ENCODE measurements at regions of chr1 and their contacts with region 1.

Region 1: GRCh38 chr1:8848663-8849386 is 29.7 kb downstream of the ENO1 start:
- DNase-seq: peak; percentile 66 to 80
- ATAC-seq: peak; percentile 83 to 92
- H3K4me3 ChIP-seq: no peak overlapping the region
- H3K27ac ChIP-seq: peak overlapping the region in 1 of 2 experiments; percentile 52; a peak in 2 of 6 replicates
- H3K4me1 ChIP-seq: peaks cover 4% of the 10 kb centered on the region; the same call in 1 of the 3 replicates
- CTCF ChIP-seq: peak; percentile 83
- EP300 ChIP-seq: no peak
- POLR2A ChIP-seq: no peak
- RAD21 ChIP-seq: peak; percentile 75 to 84

Region 2: GRCh38 chr1:8384577-8384976 is 464.2 kb before region 1 on chr1:
- CTCF ChIA-PET with region 1: no interaction called
- POLR2A ChIA-PET with region 1: no interaction called
- DNase-seq: no peak
- ATAC-seq: no peak
- H3K4me3 ChIP-seq: no peak overlapping the region
- H3K27ac ChIP-seq: no peak overlapping the region
- H3K4me1 ChIP-seq: no peaks in the 10 kb centered on the region
- CTCF ChIP-seq: no peak
- EP300 ChIP-seq: no peak
- POLR2A ChIP-seq: no peak
- RAD21 ChIP-seq: no peak

Region 3: GRCh38 chr1:8560611-8561544 is 287.9 kb before region 1 on chr1:
- CTCF ChIA-PET with region 1: interaction called, 16 read pairs
- POLR2A ChIA-PET with region 1: no interaction called
- DNase-seq: peak; percentile 15 to 55
- ATAC-seq: peak; percentile 73 to 76; a peak in 5 of 6 replicates
- H3K4me3 ChIP-seq: no peak overlapping the region
- H3K27ac ChIP-seq: peak overlapping the region in 1 of 2 experiments; percentile 29; a peak in 1 of 6 replicates
- H3K4me1 ChIP-seq: peaks cover 39% of the 10 kb centered on the region
- CTCF ChIP-seq: peak; percentile 79
- EP300 ChIP-seq: no peak
- POLR2A ChIP-seq: no peak
- RAD21 ChIP-seq: peak; percentile 82 to 86

Region 4: DNA sequence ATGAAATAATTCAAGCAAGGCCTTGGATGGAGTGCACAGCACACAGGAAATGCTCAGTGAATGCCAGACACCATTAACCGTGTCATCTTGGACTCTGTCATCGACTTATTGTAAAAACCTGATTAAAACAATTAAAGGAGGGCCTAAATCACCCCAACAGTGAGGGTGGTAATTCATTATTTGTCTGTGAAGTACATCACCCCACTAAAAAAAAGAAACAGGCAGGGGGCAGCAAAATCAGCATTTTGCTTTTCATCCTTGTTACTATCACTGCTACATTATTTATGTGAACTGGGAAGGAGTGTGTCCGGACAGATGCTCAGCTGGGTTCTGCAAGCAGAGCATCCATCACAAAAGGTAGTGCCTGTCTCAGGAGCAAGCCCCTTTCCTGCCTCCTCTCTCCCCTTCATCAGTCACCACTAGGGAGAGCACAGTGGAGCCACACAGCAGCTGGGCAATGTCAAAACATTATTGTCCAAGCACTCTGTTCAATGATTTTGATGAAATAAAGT is 129.9 kb before region 1 on chr1:
- CTCF ChIA-PET with region 1: interaction called, 11 read pairs
- POLR2A ChIA-PET with region 1: no interaction called
- DNase-seq: no peak
- ATAC-seq: peak; percentile 43 to 68; a peak in 4 of 6 replicates
- H3K4me3 ChIP-seq: no peak overlapping the region
- H3K27ac ChIP-seq: peak overlapping the region; percentile 19 to 65; a peak in 3 of 6 replicates
- H3K4me1 ChIP-seq: peaks cover 56% of the 10 kb centered on the region
- CTCF ChIP-seq: peak; percentile 44; the same call in 2 of the 3 replicates
- EP300 ChIP-seq: no peak
- POLR2A ChIP-seq: no peak
- RAD21 ChIP-seq: peak; percentile 9 to 36; a peak in 1 of 5 replicates

Region 5: GRCh38 chr1:8822373-8823294 is 26.2 kb before region 1 on chr1:
- CTCF ChIA-PET with region 1: interaction called, 21 read pairs
- POLR2A ChIA-PET with region 1: no interaction called
- DNase-seq: no peak
- ATAC-seq: 0 out of 6 replicates have a peak, but pooled peaks of 1 of the 2 experiments have one; percentile 44
- H3K4me3 ChIP-seq: no peak overlapping the region
- H3K27ac ChIP-seq: peak overlapping the region in 1 of 2 experiments; percentile 5; a peak in 1 of 6 replicates
- H3K4me1 ChIP-seq: peaks cover 18% of the 10 kb centered on the region
- CTCF ChIP-seq: no peak
- EP300 ChIP-seq: no peak
- POLR2A ChIP-seq: no peak
- RAD21 ChIP-seq: no peak

Region 6: GRCh38 chr1:8858888-8859706 is 10.3 kb after region 1 on chr1:
- CTCF ChIA-PET with region 1: interaction called, 87 read pairs
- POLR2A ChIA-PET with region 1: interaction called, 7 read pairs
- DNase-seq: peak in 1 of 2 experiments; percentile 72
- ATAC-seq: peak; percentile 4 to 20; a peak in 5 of 6 replicates
- H3K4me3 ChIP-seq: no peak overlapping the region
- H3K27ac ChIP-seq: peak overlapping the region in 1 of 2 experiments; percentile 56; a peak in 2 of 6 replicates
- H3K4me1 ChIP-seq: peaks cover 40% of the 10 kb centered on the region; the same call in 2 of the 3 replicates
- CTCF ChIP-seq: peak; percentile 52
- EP300 ChIP-seq: no peak
- POLR2A ChIP-seq: no peak
- RAD21 ChIP-seq: peak; percentile 37 to 43; a peak in 4 of 5 replicates